OCI-LY7 (cell line): ENCODE measurements at regions of chr3 and their contacts with region 1.

Region 1: GRCh38 chr3:170055209-170055608 is 17.4 kb downstream of the GPR160 start:
- DNase-seq: peak; percentile 47
- H3K4me3 ChIP-seq: peak overlapping the region; percentile 66
- H3K27ac ChIP-seq: peak overlapping the region; percentile 98
- H3K4me1 ChIP-seq: peaks cover 75% of the 10 kb centered on the region
- CTCF ChIP-seq: no peak

Region 2: GRCh38 chr3:169863458-169863899 is 191.7 kb before region 1 on chr3:
- CTCF ChIA-PET with region 1: no interaction called
- POLR2A ChIA-PET with region 1: interaction called, 6 read pairs
- intact Hi-C with region 1: loop called (anchors 1 kb)
- DNase-seq: peak; percentile 85
- H3K4me3 ChIP-seq: no peak overlapping the region
- H3K27ac ChIP-seq: no peak overlapping the region
- H3K4me1 ChIP-seq: peaks cover 33% of the 10 kb centered on the region
- CTCF ChIP-seq: peak; percentile 99

Region 3: GRCh38 chr3:169966428-169966950 is 88.7 kb before region 1 on chr3 and contains the start of gene SEC62:
- CTCF ChIA-PET with region 1: no interaction called
- POLR2A ChIA-PET with region 1: interaction called, 91 read pairs
- intact Hi-C with region 1: loop called (anchors 2 kb)
- DNase-seq: peak; percentile 97
- H3K4me3 ChIP-seq: peak within 1 kb of the TSS; percentile 81
- H3K27ac ChIP-seq: peak within 1 kb of the TSS; percentile 88
- H3K4me1 ChIP-seq: peaks cover 67% of the 10 kb centered on the region
- CTCF ChIP-seq: peak; percentile 78
- total RNA-seq, gene SEC62: 64.5 and 77.4 TPM in 2 replicates

Region 4: GRCh38 chr3:170044795-170045244 is 10.4 kb before region 1 on chr3:
- CTCF ChIA-PET with region 1: interaction called, 7 read pairs
- POLR2A ChIA-PET with region 1: interaction called, 143 read pairs
- intact Hi-C with region 1: loop called (anchors 1 kb)
- DNase-seq: peak; percentile 95
- H3K4me3 ChIP-seq: peak overlapping the region; percentile 57
- H3K27ac ChIP-seq: peak overlapping the region; percentile 98
- H3K4me1 ChIP-seq: peaks cover 75% of the 10 kb centered on the region
- CTCF ChIP-seq: no peak

Region 5: DNA sequence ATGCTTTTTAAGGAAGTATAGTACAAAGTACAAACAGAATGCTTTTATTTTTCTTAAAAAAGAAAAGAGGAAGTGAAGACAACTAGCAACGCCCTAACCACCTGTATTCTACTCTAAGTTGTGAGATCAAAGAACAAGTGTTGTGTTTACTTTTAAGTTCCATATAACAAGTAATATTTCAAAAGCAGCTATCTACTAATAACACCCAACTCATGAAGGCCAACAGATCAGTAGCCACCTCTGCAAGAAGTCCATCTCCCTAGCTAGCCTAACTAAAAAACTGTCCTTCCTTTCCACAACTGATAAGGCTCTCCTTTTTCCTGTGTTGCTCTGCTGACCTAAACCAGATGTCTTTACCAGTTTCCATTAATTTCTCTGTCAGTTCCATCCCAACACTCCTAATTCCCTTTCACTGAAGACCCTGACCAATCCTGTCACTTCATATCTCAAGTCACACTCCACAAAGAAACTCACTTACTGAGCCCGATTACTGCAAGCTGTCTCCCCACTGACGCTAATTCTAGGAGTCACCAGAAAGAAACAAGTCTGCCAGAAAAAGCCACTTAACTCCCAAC is 99.4 kb after region 1 on chr3:
- CTCF ChIA-PET with region 1: no interaction called
- POLR2A ChIA-PET with region 1: interaction called, 17 read pairs
- intact Hi-C with region 1: loop called (anchors 2 kb)
- DNase-seq: peak; percentile 90
- H3K4me3 ChIP-seq: peak overlapping the region; percentile 52
- H3K27ac ChIP-seq: peak overlapping the region; percentile 98
- H3K4me1 ChIP-seq: peaks cover 82% of the 10 kb centered on the region
- CTCF ChIP-seq: no peak

Region 6: GRCh38 chr3:170257145-170257544 is 201.9 kb after region 1 on chr3:
- CTCF ChIA-PET with region 1: no interaction called
- POLR2A ChIA-PET with region 1: no interaction called
- intact Hi-C with region 1: no loop called
- DNase-seq: peak; percentile 34
- H3K4me3 ChIP-seq: no peak overlapping the region
- H3K27ac ChIP-seq: peak overlapping the region; percentile 35
- H3K4me1 ChIP-seq: peaks cover 30% of the 10 kb centered on the region
- CTCF ChIP-seq: no peak